Vagina (tissue), 2 donors: ENCODE measurements at regions of chr2 and their contacts with region 1.

Region 1: GRCh38 chr2:136874258-136874657 is 108.9 kb downstream of the THSD7B start:
- DNase-seq: no peak
- H3K4me3 ChIP-seq: no peak overlapping the region
- H3K27ac ChIP-seq: no peak overlapping the region
- H3K4me1 ChIP-seq: no peaks in the 10 kb centered on the region
- H3K27me3 ChIP-seq: no peaks in the 10 kb centered on the region
- CTCF ChIP-seq: no peak
- POLR2A ChIP-seq: no peak

Region 2: GRCh38 chr2:136645236-136645828 is 228.9 kb before region 1 on chr2:
- intact Hi-C with region 1: no loop called
- DNase-seq: no peak
- H3K4me3 ChIP-seq: no peak overlapping the region
- H3K27ac ChIP-seq: no peak overlapping the region
- H3K4me1 ChIP-seq: peaks cover 4% of the 10 kb centered on the region
- H3K27me3 ChIP-seq: no peaks in the 10 kb centered on the region
- CTCF ChIP-seq: no peak
- POLR2A ChIP-seq: no peak

Region 3: GRCh38 chr2:136751406-136751805 is 122.9 kb before region 1 on chr2:
- intact Hi-C with region 1: no loop called
- DNase-seq: no peak
- H3K4me3 ChIP-seq: no peak overlapping the region
- H3K27ac ChIP-seq: no peak overlapping the region
- H3K4me1 ChIP-seq: no peaks in the 10 kb centered on the region
- H3K27me3 ChIP-seq: no peaks in the 10 kb centered on the region
- CTCF ChIP-seq: no peak
- POLR2A ChIP-seq: no peak

Region 4: GRCh38 chr2:137467246-137467862 is 593.1 kb after region 1 on chr2:
- intact Hi-C with region 1: no loop called
- DNase-seq: no peak
- H3K4me3 ChIP-seq: no peak overlapping the region
- H3K27ac ChIP-seq: no peak overlapping the region
- H3K4me1 ChIP-seq: no peaks in the 10 kb centered on the region
- H3K27me3 ChIP-seq: no peaks in the 10 kb centered on the region
- CTCF ChIP-seq: peak in 2 of 3 experiments; percentile 16 to 20
- POLR2A ChIP-seq: no peak

Region 5: DNA sequence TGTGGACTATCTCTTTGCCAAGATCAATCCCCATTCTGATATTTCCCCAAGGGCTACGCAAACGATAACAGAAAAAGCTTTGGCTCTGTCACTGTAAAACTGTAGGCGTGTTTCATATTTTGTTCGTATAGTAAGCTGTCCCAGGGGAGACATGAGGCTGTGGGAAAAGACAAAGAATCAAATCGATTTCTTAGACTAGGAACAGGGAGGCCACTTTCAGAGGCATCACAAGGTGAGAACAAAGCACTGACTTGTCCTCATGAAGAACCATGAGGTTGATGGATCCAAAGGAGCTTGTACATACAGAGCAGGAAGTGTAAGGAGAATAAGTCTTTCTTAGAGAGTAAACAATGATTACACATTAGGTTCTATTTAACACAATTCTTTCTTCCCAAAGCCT is 1345.7 kb after region 1 on chr2:
- intact Hi-C with region 1: loop called (anchors 5 kb)
- DNase-seq: no peak
- H3K4me3 ChIP-seq: no peak overlapping the region
- H3K27ac ChIP-seq: no peak overlapping the region
- H3K4me1 ChIP-seq: no peaks in the 10 kb centered on the region
- H3K27me3 ChIP-seq: no peaks in the 10 kb centered on the region
- CTCF ChIP-seq: no peak
- POLR2A ChIP-seq: no peak